H1 (cell line): ENCODE measurements at regions of chr12 and their contacts with region 1.

Region 1: DNA sequence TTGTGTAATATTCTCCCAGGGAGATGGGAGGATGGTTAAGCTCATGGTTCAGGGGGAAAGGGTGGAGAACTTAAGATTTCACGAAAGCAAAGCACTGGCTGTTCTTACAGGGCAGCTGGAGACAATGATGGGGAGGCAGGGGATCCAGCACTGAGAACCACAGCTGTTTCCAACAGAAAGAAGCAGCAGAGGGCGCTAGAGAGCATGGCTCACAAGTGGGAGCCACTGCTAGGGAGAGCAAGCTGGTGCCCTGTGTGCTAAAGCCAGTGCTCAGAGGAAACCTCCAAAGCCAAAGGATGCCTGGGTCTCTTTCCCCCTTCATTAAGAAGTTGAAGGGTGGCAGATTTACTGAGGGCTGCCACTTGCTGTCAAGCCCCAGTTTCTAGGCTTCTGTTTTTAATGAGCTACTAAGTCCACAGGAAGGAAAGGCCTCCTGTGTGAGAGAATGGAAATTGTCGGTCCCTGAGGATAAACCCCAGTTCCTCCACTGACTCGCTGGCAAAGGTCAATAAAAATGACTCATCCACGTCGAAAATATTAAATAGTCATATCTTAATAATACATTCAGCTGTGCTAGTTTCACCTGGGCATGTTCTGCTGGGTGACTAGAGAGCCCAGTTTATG is 199.7 kb downstream of the ANO2 start:
- DNase-seq: peak; percentile 70 to 92
- H3K4me3 ChIP-seq: no peak overlapping the region
- H3K27ac ChIP-seq: no peak overlapping the region
- H3K4me1 ChIP-seq: no peaks in the 10 kb centered on the region
- H3K27me3 ChIP-seq: no peaks in the 10 kb centered on the region
- CTCF ChIP-seq: peak; percentile 81 to 93 (median 90)
- EP300 ChIP-seq: no peak
- POLR2A ChIP-seq: no peak
- RAD21 ChIP-seq: peak; percentile 77 to 87

Region 2: DNA sequence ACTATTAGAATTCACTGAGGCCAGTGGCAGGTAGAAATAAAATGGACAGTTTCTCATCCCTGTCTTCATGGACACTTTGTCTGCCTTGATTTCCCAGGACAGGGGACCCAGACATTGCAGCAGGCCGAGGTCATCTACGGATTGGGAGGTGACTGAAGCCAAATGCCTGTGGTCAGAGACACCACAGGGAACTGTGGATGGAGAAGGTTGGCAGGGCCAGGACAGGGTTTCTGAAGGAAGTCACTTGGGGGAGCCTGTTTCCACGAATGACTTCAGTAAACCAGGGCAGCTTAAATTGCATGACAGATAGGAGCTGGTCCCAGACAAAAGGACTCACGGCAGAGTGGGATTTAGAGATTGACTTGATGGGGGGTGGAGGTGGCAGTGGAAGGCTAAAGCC is 88.5 kb before region 1 on chr12:
- CTCF ChIA-PET with region 1: no interaction called
- POLR2A ChIA-PET with region 1: no interaction called
- DNase-seq: no peak
- H3K4me3 ChIP-seq: no peak overlapping the region
- H3K27ac ChIP-seq: no peak overlapping the region
- H3K4me1 ChIP-seq: no peaks in the 10 kb centered on the region
- H3K27me3 ChIP-seq: no peaks in the 10 kb centered on the region
- CTCF ChIP-seq: no peak
- EP300 ChIP-seq: no peak
- POLR2A ChIP-seq: no peak
- RAD21 ChIP-seq: no peak

Region 3: DNA sequence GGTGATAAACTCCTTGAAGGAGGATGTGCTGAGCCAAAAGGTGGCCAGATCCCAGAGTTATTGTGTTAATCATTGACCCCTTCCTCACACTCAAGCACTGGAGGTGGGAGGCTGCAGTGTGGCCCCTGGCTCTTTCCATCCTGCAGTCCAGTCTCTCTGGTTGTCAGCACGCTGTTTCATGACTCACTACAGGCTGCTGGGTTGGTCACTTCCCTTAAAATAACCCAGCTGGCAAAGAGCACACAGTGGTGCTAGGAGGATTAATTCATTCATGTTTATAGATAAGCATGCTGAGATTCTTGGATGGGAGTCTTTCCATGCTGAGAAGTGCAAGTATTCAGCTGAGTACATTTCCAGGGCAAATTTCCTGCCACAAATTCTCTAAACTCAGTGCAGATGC is 29.1 kb before region 1 on chr12:
- CTCF ChIA-PET with region 1: interaction called, 35 read pairs
- POLR2A ChIA-PET with region 1: no interaction called
- DNase-seq: no peak
- H3K4me3 ChIP-seq: no peak overlapping the region
- H3K27ac ChIP-seq: no peak overlapping the region
- H3K4me1 ChIP-seq: no peaks in the 10 kb centered on the region
- H3K27me3 ChIP-seq: no peaks in the 10 kb centered on the region
- CTCF ChIP-seq: no peak
- EP300 ChIP-seq: no peak
- POLR2A ChIP-seq: no peak
- RAD21 ChIP-seq: no peak

Region 4: DNA sequence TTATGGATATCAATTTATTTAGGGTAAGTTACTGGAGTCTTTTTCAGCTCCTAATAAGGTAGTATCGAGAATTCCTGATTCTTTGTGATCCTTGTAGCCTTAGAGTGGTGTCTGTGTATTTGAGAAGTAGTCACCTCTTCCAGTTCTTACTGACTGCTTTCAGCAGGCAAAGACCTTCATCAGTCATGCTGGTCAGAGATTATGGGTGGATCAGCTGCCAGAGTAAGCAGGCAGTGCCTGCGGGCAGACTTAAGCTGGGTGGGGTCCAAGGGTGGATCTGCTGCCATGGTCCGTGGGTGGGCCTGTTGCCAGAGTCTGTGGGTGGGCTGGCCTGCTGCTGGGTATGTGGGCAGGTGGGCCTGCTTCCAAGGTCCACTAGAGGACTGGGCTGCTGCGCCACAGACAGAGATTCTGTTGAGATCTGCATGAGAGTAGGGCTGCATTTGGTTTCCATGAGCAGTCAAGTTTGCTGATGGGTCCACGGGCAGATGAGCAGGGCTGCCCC is 11.0 kb after region 1 on chr12:
- CTCF ChIA-PET with region 1: interaction called, 12 read pairs
- POLR2A ChIA-PET with region 1: no interaction called
- DNase-seq: no peak
- H3K4me3 ChIP-seq: no peak overlapping the region
- H3K27ac ChIP-seq: no peak overlapping the region
- H3K4me1 ChIP-seq: peaks cover 0 to 6% (median 2%) of the 10 kb centered on the region in 4 experiments; a peak in 3 of 7 replicates
- H3K27me3 ChIP-seq: no peaks in the 10 kb centered on the region
- CTCF ChIP-seq: no peak
- EP300 ChIP-seq: no peak
- POLR2A ChIP-seq: no peak
- RAD21 ChIP-seq: no peak

Region 5: DNA sequence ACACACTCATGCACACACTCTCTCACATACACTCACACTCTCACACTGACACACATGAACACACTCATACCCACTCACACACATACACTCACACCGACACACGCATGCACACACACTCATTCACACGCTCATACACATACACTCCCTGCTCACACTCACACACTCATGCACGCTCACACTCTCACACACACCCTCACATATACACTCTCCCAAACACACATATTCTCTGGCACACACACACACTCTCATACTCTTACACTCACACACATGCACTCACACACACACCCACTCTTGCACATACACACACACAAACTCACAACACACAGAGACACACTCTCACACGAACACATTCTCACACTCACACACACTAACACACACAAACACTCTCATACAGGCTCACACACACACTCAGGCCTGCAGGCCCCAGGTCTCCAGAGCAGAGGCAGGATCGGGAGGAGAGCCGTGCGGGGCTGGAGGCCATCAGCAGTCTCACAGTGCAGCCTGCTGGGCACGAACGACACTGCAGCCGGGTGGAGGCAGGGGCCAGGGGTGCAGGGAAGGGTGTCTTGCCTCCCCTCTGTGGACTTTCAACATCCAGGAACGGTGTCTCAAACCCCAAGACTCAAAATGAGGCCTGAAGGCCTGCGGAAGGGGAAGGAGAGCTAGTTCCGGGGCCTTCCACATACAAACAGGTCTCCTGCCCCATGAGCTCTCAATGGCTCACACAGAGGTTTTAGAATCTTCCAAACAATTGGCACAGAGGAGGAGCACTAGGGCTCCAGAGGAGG is 51.0 kb after region 1 on chr12:
- CTCF ChIA-PET with region 1: interaction called, 134 read pairs
- POLR2A ChIA-PET with region 1: no interaction called
- DNase-seq: peak in 1 of 2 experiments; percentile 87
- H3K4me3 ChIP-seq: no peak overlapping the region
- H3K27ac ChIP-seq: no peak overlapping the region
- H3K4me1 ChIP-seq: no peaks in the 10 kb centered on the region
- H3K27me3 ChIP-seq: 0 out of 7 replicates have a peak, but pooled peaks cover 0 to 3% (median 0%) of the 10 kb centered on the region in 4 experiments
- CTCF ChIP-seq: peak; percentile 95 to 100 (median 97)
- EP300 ChIP-seq: no peak
- POLR2A ChIP-seq: no peak
- RAD21 ChIP-seq: peak; percentile 98

Region 6: GRCh38 chr12:5988659-5989116 is 243.3 kb after region 1 on chr12:
- CTCF ChIA-PET with region 1: interaction called, 13 read pairs
- POLR2A ChIA-PET with region 1: no interaction called
- DNase-seq: peak; percentile 75 to 86
- H3K4me3 ChIP-seq: no peak overlapping the region
- H3K27ac ChIP-seq: no peak overlapping the region; the same call in 1 of the 2 replicates
- H3K4me1 ChIP-seq: peaks cover 2 to 6% (median 4%) of the 10 kb centered on the region in 4 experiments; a peak in 6 of 7 replicates
- H3K27me3 ChIP-seq: no peaks in the 10 kb centered on the region
- CTCF ChIP-seq: peak; percentile 93 to 99 (median 97)
- EP300 ChIP-seq: peak in 1 of 2 experiments; percentile 57; a peak in 1 of 3 replicates
- POLR2A ChIP-seq: no peak
- RAD21 ChIP-seq: peak; percentile 98 to 99